ENCODE measurements at regions of chr1 and their contacts with region 1.

Region 1: DNA sequence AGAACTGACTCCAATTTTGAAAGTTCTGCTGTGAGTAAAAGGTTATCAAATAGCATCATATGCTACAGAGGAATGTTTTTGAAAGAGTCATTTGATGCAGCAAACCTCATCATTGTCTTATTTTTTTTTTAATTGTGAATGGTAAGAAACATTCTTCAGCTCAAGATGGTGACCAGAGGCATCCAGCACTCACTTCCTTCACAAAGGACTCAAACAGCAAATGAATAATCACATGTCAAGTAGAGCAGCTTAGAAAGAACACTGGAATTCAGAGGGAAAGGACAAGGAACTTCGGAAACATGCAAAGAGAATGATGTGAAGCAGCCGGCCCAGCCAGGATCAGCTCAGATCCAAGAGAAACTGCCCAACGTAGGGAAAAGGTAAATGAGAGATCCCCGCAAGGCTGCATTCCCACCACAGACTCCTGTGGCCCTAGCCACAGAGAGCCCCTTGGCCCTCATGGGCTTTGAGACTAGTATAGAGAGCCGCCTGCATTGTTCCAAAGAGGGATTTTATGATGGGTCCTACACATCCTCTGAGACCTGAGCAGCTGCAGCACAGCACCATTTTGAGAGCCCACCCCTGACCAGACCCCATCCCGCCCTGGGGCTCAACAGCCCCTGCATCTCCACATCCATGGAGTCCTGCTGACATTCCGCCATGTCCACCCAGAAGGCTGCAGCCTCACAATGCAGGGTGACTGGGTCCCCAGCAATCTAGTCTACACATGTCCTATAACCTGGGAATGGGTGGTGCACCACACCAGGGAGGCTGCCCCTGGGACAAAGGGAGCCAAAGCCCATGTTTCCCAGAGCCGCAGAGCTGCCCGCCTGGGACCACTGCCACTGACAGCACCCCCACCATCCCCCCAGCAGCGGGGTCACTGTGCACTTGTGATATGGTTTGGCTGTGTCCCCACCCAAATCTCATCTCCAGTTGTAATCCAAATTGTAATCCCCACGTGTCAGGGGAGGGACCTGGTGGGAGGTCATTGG is 21.2 kb upstream of the UTS2 start:
- DNase-seq: no peak
- H3K4me3 ChIP-seq: no peak overlapping the region
- H3K27ac ChIP-seq: no peak overlapping the region
- H3K4me1 ChIP-seq: no peaks in the 10 kb centered on the region
- H3K27me3 ChIP-seq: peaks cover 5% of the 10 kb centered on the region
- CTCF ChIP-seq: no peak
- EP300 ChIP-seq: no peak
- POLR2A ChIP-seq: no peak

Region 2: GRCh38 chr1:7470880-7471638 is 403.0 kb before region 1 on chr1:
- in situ Hi-C with region 1: no loop called
- intact Hi-C with region 1: no loop called
- DNase-seq: peak; percentile 59
- H3K4me3 ChIP-seq: no peak overlapping the region
- H3K27ac ChIP-seq: peak overlapping the region; percentile 29 to 67 (median 40)
- H3K4me1 ChIP-seq: peaks cover 4 to 15% (median 8%) of the 10 kb centered on the region in 4 donors
- H3K27me3 ChIP-seq: no peaks in the 10 kb centered on the region
- CTCF ChIP-seq: no peak
- EP300 ChIP-seq: no peak
- POLR2A ChIP-seq: no peak

Region 3: GRCh38 chr1:7638078-7638477 is 236.0 kb before region 1 on chr1:
- in situ Hi-C with region 1: no loop called
- intact Hi-C with region 1: no loop called
- DNase-seq: no peak
- H3K4me3 ChIP-seq: no peak overlapping the region
- H3K27ac ChIP-seq: no peak overlapping the region
- H3K4me1 ChIP-seq: no peaks in the 10 kb centered on the region
- H3K27me3 ChIP-seq: no peaks in the 10 kb centered on the region
- CTCF ChIP-seq: no peak
- EP300 ChIP-seq: no peak
- POLR2A ChIP-seq: no peak

Region 4: DNA sequence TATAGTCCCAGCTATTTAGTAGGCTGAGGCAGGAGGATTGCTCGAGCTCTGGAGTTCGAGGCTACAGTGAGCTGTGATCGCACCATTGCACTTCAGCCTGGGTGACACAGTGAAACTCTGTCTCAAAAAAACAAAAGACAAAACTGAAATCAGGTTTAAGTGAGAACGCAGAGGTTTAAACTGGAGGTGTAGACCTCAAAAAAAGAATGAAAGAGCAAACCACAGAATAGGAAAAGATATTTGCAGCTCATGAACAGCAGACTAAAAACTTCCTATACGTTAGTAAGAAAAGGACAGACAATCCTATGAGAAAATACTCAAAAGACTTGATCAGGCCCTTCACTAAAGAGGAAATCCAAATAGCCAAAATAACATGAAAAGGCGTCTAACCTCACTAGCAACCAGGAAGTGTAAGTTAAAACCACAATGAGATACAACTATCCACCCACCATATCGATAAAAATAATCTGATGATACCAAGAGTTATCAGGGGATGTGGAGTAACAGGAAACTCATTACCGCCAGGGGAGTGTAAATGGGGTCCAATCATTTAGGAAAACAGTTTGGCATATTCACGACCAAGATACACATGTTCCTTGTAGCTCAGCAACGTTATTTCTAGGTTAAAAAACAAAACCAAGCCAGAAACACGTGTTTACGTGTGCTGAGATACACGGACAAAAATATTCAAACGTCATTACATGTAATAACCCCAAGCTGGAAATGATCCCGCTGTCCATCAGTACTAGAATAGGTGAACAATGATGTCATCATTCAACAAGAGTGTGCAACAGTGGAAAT is 56.7 kb after region 1 on chr1:
- in situ Hi-C with region 1: no loop called
- intact Hi-C with region 1: loop called (anchors 2 kb)
- DNase-seq: no peak
- H3K4me3 ChIP-seq: no peak overlapping the region
- H3K27ac ChIP-seq: no peak overlapping the region
- H3K4me1 ChIP-seq: no peaks in the 10 kb centered on the region
- H3K27me3 ChIP-seq: peaks cover 50% of the 10 kb centered on the region
- CTCF ChIP-seq: no peak
- EP300 ChIP-seq: no peak
- POLR2A ChIP-seq: no peak